ENCODE measurements at regions of chr7 and their contacts with region 1.

Region 1: GRCh38 chr7:25851332-25852210 is 300.4 kb upstream of the NFE2L3 start:
- DNase-seq: peak; percentile 88
- H3K4me3 Mint-ChIP-seq: peak overlapping the region; percentile 49
- H3K27ac Mint-ChIP-seq: no peak overlapping the region
- H3K4me1 Mint-ChIP-seq: peaks cover 18% of the 10 kb centered on the region
- H3K27me3 Mint-ChIP-seq: peaks cover 27% of the 10 kb centered on the region
- CTCF ChIP-seq: peak; percentile 85

Region 2: GRCh38 chr7:25259587-25260243 is 591.9 kb before region 1 on chr7:
- CTCF ChIA-PET with region 1: interaction called, 31 read pairs
- POLR2A ChIA-PET with region 1: no interaction called
- intact Hi-C with region 1: loop called (anchors 1 kb)
- DNase-seq: peak; percentile 83
- H3K4me3 Mint-ChIP-seq: no peak overlapping the region
- H3K27ac Mint-ChIP-seq: no peak overlapping the region
- H3K4me1 Mint-ChIP-seq: peaks cover 9% of the 10 kb centered on the region
- H3K27me3 Mint-ChIP-seq: peaks cover 71% of the 10 kb centered on the region
- CTCF ChIP-seq: peak; percentile 89

Region 3: DNA sequence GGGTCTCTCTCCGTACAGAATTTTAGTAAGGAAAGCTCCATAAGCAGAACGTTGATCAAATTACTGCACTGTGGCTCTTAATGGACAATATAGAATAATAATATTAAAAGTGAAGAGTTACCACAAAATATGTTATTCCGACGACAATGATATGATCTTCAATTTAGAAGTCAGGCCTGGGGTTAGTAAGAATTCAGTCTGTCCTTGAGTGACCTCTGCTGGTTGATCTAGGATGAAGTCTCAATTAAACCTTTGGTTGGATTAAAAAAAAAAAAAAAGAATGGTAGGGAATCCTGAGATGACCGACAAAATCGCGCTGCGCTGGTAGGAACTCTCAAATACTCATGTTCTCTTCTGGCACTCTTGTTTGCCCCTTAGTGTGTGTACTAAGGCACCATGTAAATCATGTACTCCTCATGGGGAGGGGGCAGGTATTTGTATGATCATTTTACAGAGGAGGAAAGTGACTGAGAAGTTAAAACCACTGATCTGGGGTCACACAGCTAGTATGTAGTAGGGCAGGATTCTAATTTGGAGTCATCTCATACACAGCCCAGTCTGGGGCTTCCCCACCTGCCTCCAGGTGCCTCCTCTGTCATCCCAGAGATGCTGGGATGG is 462.0 kb before region 1 on chr7:
- CTCF ChIA-PET with region 1: interaction called, 93 read pairs
- POLR2A ChIA-PET with region 1: interaction called, 3 read pairs
- intact Hi-C with region 1: loop called (anchors 1 kb)
- DNase-seq: peak; percentile 61
- H3K4me3 Mint-ChIP-seq: no peak overlapping the region
- H3K27ac Mint-ChIP-seq: no peak overlapping the region
- H3K4me1 Mint-ChIP-seq: no peaks in the 10 kb centered on the region
- H3K27me3 Mint-ChIP-seq: peaks cover 96% of the 10 kb centered on the region
- CTCF ChIP-seq: peak; percentile 62

Region 4: GRCh38 chr7:25565949-25566348 is 285.6 kb before region 1 on chr7:
- CTCF ChIA-PET with region 1: interaction called, 85 read pairs
- POLR2A ChIA-PET with region 1: interaction called, 4 read pairs
- intact Hi-C with region 1: loop called (anchors 1 kb)
- DNase-seq: peak; percentile 71
- H3K4me3 Mint-ChIP-seq: no peak overlapping the region
- H3K27ac Mint-ChIP-seq: no peak overlapping the region
- H3K4me1 Mint-ChIP-seq: no peaks in the 10 kb centered on the region
- H3K27me3 Mint-ChIP-seq: peaks cover 45% of the 10 kb centered on the region
- CTCF ChIP-seq: peak; percentile 100

Region 5: GRCh38 chr7:25720427-25720826 is 131.1 kb before region 1 on chr7:
- CTCF ChIA-PET with region 1: interaction called, 6 read pairs
- POLR2A ChIA-PET with region 1: interaction called, 3 read pairs
- intact Hi-C with region 1: loop called (anchors 2 kb)
- DNase-seq: peak; percentile 19
- H3K4me3 Mint-ChIP-seq: no peak overlapping the region
- H3K27ac Mint-ChIP-seq: no peak overlapping the region
- H3K4me1 Mint-ChIP-seq: no peaks in the 10 kb centered on the region
- H3K27me3 Mint-ChIP-seq: peaks cover 87% of the 10 kb centered on the region
- CTCF ChIP-seq: peak; percentile 41

Region 6: GRCh38 chr7:25787336-25787735 is 64.2 kb before region 1 on chr7:
- CTCF ChIA-PET with region 1: interaction called, 10 read pairs
- POLR2A ChIA-PET with region 1: no interaction called
- intact Hi-C with region 1: no loop called
- DNase-seq: no peak
- H3K4me3 Mint-ChIP-seq: no peak overlapping the region
- H3K27ac Mint-ChIP-seq: no peak overlapping the region
- H3K4me1 Mint-ChIP-seq: no peaks in the 10 kb centered on the region
- H3K27me3 Mint-ChIP-seq: peaks cover 39% of the 10 kb centered on the region
- CTCF ChIP-seq: no peak

Region 7: GRCh38 chr7:25839084-25839769 is 12.3 kb before region 1 on chr7:
- CTCF ChIA-PET with region 1: interaction called, 22 read pairs
- POLR2A ChIA-PET with region 1: no interaction called
- intact Hi-C with region 1: no loop called
- DNase-seq: peak; percentile 28
- H3K4me3 Mint-ChIP-seq: no peak overlapping the region
- H3K27ac Mint-ChIP-seq: no peak overlapping the region
- H3K4me1 Mint-ChIP-seq: no peaks in the 10 kb centered on the region
- H3K27me3 Mint-ChIP-seq: peaks cover 20% of the 10 kb centered on the region
- CTCF ChIP-seq: peak; percentile 36

Region 8: GRCh38 chr7:25933921-25934320 is 82.3 kb after region 1 on chr7:
- CTCF ChIA-PET with region 1: no interaction called
- POLR2A ChIA-PET with region 1: no interaction called
- intact Hi-C with region 1: no loop called
- DNase-seq: no peak
- H3K4me3 Mint-ChIP-seq: no peak overlapping the region
- H3K27ac Mint-ChIP-seq: no peak overlapping the region
- H3K4me1 Mint-ChIP-seq: peaks cover 4% of the 10 kb centered on the region
- H3K27me3 Mint-ChIP-seq: no peaks in the 10 kb centered on the region
- CTCF ChIP-seq: no peak

Measured in MCF 10A (cell line).